Mucosa of descending colon (tissue), 3 donors: ENCODE measurements at regions of chrX and their contacts with region 1.

Region 1: DNA sequence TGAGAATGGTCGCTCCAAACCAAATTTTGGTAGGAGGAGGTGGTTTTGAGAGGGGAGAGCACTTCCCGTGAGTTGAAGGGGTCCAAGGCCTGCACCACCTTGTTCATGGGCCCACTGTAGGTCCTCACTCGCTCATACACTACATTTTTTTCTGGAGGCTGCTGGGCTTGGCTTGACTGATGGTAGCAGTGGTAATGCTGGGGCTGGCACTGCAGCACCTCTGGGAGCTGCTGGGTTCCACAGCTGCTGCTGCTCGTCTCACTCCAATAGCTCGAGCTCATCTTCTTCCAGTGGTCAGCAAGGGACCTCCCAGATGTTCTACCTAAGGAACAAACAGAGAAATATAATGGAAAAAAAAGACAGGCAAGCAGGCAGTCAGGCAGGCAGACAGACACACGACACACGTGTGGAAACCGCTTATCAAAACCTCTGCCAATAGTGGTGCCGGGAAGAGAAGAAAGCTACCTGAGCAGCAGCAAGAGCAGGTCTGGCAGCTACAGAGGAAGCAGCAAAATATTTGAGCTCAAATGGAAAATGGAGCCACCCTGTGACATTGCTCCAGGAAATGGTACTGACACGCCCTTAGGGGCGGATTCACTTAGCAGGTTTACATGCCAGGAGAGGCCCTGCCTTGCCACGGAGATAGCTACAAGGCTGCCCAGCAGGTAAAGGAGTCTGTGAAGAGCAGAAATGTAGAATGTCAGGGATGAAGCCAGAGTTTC is at the start of gene POF1B:
- DNase-seq: peak; percentile 67 to 87 (median 78)
- ATAC-seq: peak; percentile 92
- H3K4me3 ChIP-seq: no peak within 1 kb of the TSS
- H3K4me1 ChIP-seq: no peaks in the 10 kb centered on the region
- CTCF ChIP-seq: no peak
- total RNA-seq, gene POF1B: 46.1 to 142 (median 141) TPM

Region 2: DNA sequence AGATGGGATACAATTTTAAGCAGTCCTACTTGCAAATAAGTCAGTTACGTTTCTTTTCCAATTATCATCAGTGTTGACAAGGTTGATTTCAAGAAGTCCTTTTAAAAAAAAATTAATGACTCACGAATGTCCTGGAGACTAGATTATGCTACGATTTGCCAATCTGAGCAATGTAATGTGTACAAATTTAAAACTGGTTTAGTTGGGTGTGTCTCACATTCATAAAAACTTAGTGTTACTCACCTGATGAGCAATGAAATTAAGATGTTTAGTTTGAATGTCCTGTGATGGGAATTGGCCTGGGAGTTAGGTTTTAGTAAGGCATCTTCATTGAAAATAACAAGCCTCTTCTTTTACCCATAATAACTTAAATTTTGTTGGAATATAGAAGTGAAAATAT is 136.8 kb after region 1 on chrX:
- intact Hi-C with region 1: loop called in 1 of 2 experiments (anchors 10 kb)
- DNase-seq: no peak
- ATAC-seq: peak; percentile 62
- H3K4me3 ChIP-seq: no peak overlapping the region
- H3K4me1 ChIP-seq: no peaks in the 10 kb centered on the region
- CTCF ChIP-seq: no peak